ENCODE measurements at regions of chr20 and their contacts with region 1.

Region 1: GRCh38 chr20:39445089-39445488 is 482.9 kb downstream of the DHX35 start:
- DNase-seq: no peak
- ATAC-seq: no peak
- H3K4me3 ChIP-seq: no peak overlapping the region
- H3K27ac ChIP-seq: no peak overlapping the region
- H3K4me1 ChIP-seq: no peaks in the 10 kb centered on the region
- H3K27me3 ChIP-seq: no peaks in the 10 kb centered on the region
- CTCF ChIP-seq: no peak

Region 2: GRCh38 chr20:39206899-39207564 is 238.1 kb before region 1 on chr20:
- intact Hi-C with region 1: no loop called
- DNase-seq: no peak
- ATAC-seq: no peak
- H3K4me3 ChIP-seq: no peak overlapping the region
- H3K27ac ChIP-seq: no peak overlapping the region
- H3K4me1 ChIP-seq: no peaks in the 10 kb centered on the region
- H3K27me3 ChIP-seq: no peaks in the 10 kb centered on the region
- CTCF ChIP-seq: no peak

Region 3: GRCh38 chr20:39468703-39469102 is 23.6 kb after region 1 on chr20:
- intact Hi-C with region 1: loop called in 1 of 10 experiments (anchors 1 kb)
- DNase-seq: no peak
- ATAC-seq: no peak
- H3K4me3 ChIP-seq: no peak overlapping the region
- H3K27ac ChIP-seq: no peak overlapping the region
- H3K4me1 ChIP-seq: no peaks in the 10 kb centered on the region
- H3K27me3 ChIP-seq: no peaks in the 10 kb centered on the region
- CTCF ChIP-seq: no peak

Region 4: DNA sequence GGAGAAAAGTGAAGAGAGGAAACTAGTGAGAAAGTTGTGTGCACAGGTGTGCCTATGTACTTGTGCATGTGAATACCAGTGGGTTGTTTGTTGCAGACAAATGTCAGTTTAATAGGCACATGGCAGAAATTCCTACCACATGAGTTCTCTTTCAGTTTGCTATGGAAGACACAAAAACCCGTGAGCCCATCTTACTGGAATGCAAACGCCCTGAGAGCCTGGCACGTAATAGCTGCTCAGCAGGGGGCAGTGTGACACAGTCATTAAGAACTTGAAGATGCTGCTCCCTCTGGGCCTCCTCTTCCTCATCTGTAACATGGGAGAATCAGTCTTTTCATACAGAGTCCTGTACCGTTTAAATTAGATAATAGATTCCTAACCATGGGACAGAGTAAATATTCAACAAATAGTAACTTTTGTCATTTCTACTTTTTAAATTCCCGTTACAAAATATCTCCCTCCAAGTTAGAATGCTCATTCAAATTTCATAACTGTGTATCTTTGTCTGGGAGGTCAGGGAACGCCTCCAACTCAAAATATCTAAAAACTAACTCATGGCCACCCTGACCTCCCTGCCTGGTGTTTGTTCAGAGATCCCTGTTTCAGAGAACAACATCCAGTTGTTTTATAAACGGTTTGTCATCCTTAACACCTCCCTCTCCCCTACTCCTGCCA is 441.0 kb after region 1 on chr20:
- intact Hi-C with region 1: no loop called
- DNase-seq: peak; percentile 51 to 69
- ATAC-seq: peak; percentile 61 to 88 (median 82)
- H3K4me3 ChIP-seq: no peak overlapping the region
- H3K27ac ChIP-seq: peak overlapping the region in 2 of 10 donors; percentile 10 to 50
- H3K4me1 ChIP-seq: peaks cover 0 to 11% (median 0%) of the 10 kb centered on the region in 9 donors
- H3K27me3 ChIP-seq: no peaks in the 10 kb centered on the region
- CTCF ChIP-seq: peak; percentile 24 to 71 (median 65)

Measured in heart right ventricle (tissue), 16 donors.